ENCODE measurements at regions of chr7 and their contacts with region 1.

Region 1: DNA sequence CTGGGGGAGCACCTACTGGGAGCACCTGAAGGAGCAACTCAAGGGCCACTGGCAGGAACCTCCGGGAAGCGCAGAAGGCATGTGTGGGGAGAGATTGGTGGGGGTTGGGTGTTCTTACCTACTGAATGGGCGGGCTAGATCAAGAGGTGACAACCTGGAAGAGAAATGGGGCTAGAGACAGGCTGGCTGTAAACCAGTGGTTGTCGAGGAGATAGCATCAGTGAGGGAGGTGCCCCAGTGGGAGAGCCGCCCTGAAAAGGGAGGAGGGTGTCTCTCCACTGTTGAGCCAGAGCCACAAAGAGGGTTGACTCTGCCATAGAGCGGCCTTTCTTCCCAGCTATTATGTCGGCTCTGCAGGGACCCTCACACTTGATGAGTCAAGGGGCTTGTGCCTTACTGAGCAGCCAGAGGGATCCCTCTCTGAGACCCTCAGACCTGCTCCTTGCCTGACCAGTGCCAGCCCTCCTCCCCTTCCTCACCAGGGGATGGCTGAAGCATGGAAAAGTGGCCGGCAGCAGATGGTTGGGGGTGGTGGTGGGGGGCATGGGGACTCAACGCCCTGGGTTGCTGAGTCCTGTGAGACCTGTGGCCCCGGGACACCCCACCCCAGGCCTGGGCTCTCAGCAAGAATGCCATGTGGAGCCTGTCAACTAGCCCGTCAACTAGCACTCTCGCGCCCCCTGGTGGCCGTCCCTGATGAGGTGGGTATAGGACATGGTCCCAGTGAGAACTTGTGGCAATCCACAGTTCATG is 36.5 kb upstream of the PURB start:
- DNase-seq: peak; percentile 57
- ATAC-seq: peak; percentile 98
- H3K4me3 ChIP-seq: no peak overlapping the region
- H3K27ac ChIP-seq: no peak overlapping the region
- H3K4me1 ChIP-seq: no peaks in the 10 kb centered on the region
- H3K27me3 ChIP-seq: peaks cover under 1% of the 10 kb centered on the region
- CTCF ChIP-seq: peak; percentile 84
- POLR2A ChIP-seq: 0 out of 2 replicates have a peak, but pooled peaks have one; percentile 31
- RAD21 ChIP-seq: peak; percentile 90

Region 2: DNA sequence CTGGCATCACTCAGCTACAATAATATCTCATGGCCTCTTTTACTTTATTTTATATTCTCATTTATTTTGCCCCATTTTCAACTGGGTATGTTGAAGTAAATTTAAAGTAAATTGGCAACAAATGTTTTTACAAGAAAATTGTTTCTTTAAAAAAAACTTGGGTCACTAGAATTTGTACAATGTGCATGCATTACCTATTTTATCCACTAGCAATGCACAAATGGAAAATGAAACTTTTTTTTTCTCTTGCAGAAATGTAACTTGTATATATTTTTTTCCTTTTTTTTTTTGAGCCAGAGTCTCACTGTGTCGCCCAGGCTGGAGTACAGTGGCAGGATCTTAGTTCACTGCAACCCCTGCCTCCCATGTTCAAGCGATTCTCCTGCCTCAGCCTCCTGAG is 63.6 kb before region 1 on chr7:
- CTCF ChIA-PET with region 1: interaction called, 7 read pairs
- POLR2A ChIA-PET with region 1: interaction called, 3 read pairs
- dilution Hi-C with region 1: no loop called
- in situ Hi-C with region 1: loop called (anchors 5 kb)
- intact Hi-C with region 1: loop called (anchors 1 kb)
- DNase-seq: no peak
- ATAC-seq: no peak
- H3K4me3 ChIP-seq: no peak overlapping the region
- H3K27ac ChIP-seq: no peak overlapping the region
- H3K4me1 ChIP-seq: peaks cover 2% of the 10 kb centered on the region; the same call in 1 of the 2 replicates
- H3K27me3 ChIP-seq: no peaks in the 10 kb centered on the region
- CTCF ChIP-seq: no peak; the same call in 1 of the 2 replicates
- POLR2A ChIP-seq: no peak
- RAD21 ChIP-seq: no peak

Measured in IMR-90 (cell line).